ENCODE measurements at regions of chr22 and their contacts with region 1.

Region 1: GRCh38 chr22:29553351-29554224 is at the start of gene THOC5:
- DNase-seq: peak; percentile 71
- ATAC-seq: peak; percentile 99
- H3K4me3 ChIP-seq: peak within 1 kb of the TSS; percentile 77
- H3K27ac ChIP-seq: peak within 1 kb of the TSS; percentile 68
- H3K4me1 ChIP-seq: no peaks in the 10 kb centered on the region
- H3K27me3 ChIP-seq: no peaks in the 10 kb centered on the region
- CTCF ChIP-seq: peak; percentile 49 to 74 (median 58)
- EP300 ChIP-seq: no peak
- POLR2A ChIP-seq: peak; percentile 91
- RAD21 ChIP-seq: no peak
- polyA plus RNA-seq, gene THOC5: 20.9 to 40.9 TPM

Region 2: DNA sequence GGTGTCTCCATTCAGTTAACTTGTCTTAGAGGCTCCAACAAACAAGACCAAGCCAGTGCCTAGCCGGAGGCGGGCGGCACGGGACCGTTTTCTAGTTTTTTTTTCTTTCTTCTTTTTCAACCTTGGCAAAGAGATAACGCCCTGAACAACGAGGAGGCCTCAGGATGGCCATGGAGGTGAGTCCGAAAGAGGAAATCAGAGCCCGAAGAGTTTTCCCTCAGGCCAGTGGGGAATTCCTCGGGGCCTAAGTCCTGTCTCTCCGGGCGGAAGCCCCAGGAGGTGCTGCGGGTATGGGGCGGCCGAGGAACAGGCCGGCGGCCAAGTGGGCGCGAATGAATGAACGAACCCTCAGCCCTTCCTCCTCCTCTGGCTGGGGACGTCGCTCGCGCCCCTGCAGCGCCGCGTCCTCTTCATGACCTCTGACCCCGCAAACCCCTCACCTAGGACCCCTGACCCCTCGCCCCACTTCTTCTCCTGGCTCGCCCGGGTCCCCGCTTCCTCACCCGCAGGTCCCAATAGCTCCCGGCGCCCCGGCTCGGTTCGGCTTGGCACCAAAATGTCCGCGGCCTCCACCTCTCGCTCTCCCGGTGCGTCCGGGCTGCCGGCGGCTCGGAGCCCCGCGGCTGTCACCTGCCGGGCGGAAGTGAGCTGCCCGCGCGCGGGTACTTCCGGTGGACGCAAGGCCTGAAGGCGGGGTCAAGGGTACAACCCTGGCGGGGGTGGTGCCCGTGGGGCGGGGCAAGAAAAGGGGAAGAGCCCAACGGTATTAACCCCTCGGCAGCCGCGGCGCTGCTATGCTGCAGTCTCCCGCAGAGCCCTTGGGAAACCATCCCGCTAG is 165.4 kb before region 1 on chr22 and contains the start of gene AP1B1:
- CTCF ChIA-PET with region 1: interaction called, 10 read pairs
- POLR2A ChIA-PET with region 1: interaction called, 3 read pairs
- RAD21 ChIA-PET with region 1: interaction called, 3 read pairs
- SMC1A ChIA-PET with region 1: no interaction called
- in situ Hi-C with region 1: no loop called
- intact Hi-C with region 1: no loop called
- DNase-seq: peak; percentile 69
- ATAC-seq: peak; percentile 90
- H3K4me3 ChIP-seq: peak within 1 kb of the TSS; percentile 92
- H3K27ac ChIP-seq: peak within 1 kb of the TSS; percentile 78
- H3K4me1 ChIP-seq: peaks cover 38% of the 10 kb centered on the region
- H3K27me3 ChIP-seq: no peaks in the 10 kb centered on the region
- CTCF ChIP-seq: no peak
- EP300 ChIP-seq: no peak
- POLR2A ChIP-seq: peak; percentile 93
- RAD21 ChIP-seq: no peak
- polyA plus RNA-seq, gene AP1B1: 2.1 to 5.0 TPM

Region 3: DNA sequence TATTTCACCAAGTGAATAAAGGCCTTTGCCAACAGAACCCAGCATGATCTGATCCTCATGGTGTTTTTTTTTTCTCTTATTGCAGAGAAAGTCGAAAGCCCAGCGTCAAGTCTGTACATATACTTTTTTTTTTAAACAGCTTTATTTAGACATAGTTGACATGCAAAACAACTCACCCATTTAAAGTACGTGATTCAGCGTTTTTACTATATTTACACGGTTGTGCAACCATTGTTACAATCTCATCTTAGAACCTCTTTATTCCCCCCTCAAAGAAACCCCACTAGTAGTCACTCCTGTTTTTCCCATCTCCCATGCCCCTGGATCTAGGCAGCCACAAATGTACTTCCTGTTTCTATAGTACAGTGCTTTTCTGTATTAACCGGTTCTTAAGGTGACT is 144.6 kb before region 1 on chr22:
- CTCF ChIA-PET with region 1: interaction called, 3 read pairs
- POLR2A ChIA-PET with region 1: no interaction called
- RAD21 ChIA-PET with region 1: no interaction called
- SMC1A ChIA-PET with region 1: no interaction called
- in situ Hi-C with region 1: no loop called
- intact Hi-C with region 1: loop called (anchors 10 kb)
- DNase-seq: no peak
- ATAC-seq: no peak
- H3K4me3 ChIP-seq: no peak overlapping the region
- H3K27ac ChIP-seq: no peak overlapping the region
- H3K4me1 ChIP-seq: peaks cover 23% of the 10 kb centered on the region
- H3K27me3 ChIP-seq: no peaks in the 10 kb centered on the region
- CTCF ChIP-seq: no peak
- EP300 ChIP-seq: no peak
- POLR2A ChIP-seq: no peak
- RAD21 ChIP-seq: no peak

Region 4: GRCh38 chr22:29580200-29580810 is 26.7 kb after region 1 on chr22:
- CTCF ChIA-PET with region 1: interaction called, 11 read pairs
- POLR2A ChIA-PET with region 1: interaction called, 7 read pairs
- RAD21 ChIA-PET with region 1: no interaction called
- SMC1A ChIA-PET with region 1: no interaction called
- in situ Hi-C with region 1: no loop called
- intact Hi-C with region 1: loop called (anchors 2 kb)
- DNase-seq: no peak
- ATAC-seq: peak; percentile 66
- H3K4me3 ChIP-seq: peak overlapping the region; percentile 99
- H3K27ac ChIP-seq: peak overlapping the region; percentile 51
- H3K4me1 ChIP-seq: peaks cover 4% of the 10 kb centered on the region; the same call in 1 of the 2 replicates
- H3K27me3 ChIP-seq: no peaks in the 10 kb centered on the region
- CTCF ChIP-seq: no peak
- EP300 ChIP-seq: no peak
- POLR2A ChIP-seq: no peak
- RAD21 ChIP-seq: no peak

Region 5: DNA sequence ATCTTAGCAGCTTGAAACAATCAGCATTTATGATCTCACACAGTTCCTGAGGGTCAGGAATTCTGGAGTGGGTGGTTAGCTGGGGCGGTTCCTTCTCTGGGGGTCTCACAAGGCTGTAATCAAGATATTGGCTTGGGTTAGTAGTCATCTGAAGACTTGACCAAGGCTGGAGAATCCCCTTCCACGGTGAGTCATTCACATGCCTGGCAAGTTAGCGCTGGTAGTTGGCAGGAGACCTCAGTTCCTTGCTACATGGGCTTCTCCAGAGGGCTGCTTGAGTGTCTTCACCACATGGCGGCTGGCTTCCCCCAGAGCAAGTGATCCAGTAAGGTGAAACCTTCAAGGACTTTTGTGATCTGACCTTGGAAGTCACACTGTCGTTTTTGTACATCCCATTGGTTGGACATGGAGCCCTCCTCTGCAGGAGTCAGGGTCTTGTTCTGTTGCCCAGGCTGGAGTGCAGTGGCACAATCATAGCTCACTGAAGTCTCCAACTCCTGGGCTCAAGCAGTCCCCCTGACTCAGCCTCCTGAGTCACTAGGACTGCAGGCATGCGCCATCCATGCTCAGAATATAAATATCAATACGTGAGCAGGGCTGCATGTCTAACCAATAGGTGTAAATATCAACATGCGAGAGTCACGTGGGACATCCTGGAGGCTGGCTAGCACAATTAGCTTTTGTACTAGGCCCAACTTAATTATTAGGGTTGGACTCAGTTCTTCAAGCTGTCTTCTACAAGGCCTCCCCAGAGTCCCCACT is 34.5 kb after region 1 on chr22:
- CTCF ChIA-PET with region 1: interaction called, 15 read pairs
- POLR2A ChIA-PET with region 1: no interaction called
- RAD21 ChIA-PET with region 1: no interaction called
- SMC1A ChIA-PET with region 1: interaction called, 4 read pairs
- in situ Hi-C with region 1: no loop called
- intact Hi-C with region 1: no loop called
- DNase-seq: no peak
- ATAC-seq: peak; percentile 19; the same call in 1 of the 3 replicates
- H3K4me3 ChIP-seq: no peak overlapping the region
- H3K27ac ChIP-seq: no peak overlapping the region
- H3K4me1 ChIP-seq: no peaks in the 10 kb centered on the region
- H3K27me3 ChIP-seq: no peaks in the 10 kb centered on the region
- CTCF ChIP-seq: no peak
- EP300 ChIP-seq: no peak
- POLR2A ChIP-seq: no peak
- RAD21 ChIP-seq: no peak

Region 6: GRCh38 chr22:29609139-29609538 is 55.6 kb after region 1 on chr22:
- CTCF ChIA-PET with region 1: interaction called, 6 read pairs
- POLR2A ChIA-PET with region 1: no interaction called
- RAD21 ChIA-PET with region 1: interaction called, 3 read pairs
- SMC1A ChIA-PET with region 1: no interaction called
- in situ Hi-C with region 1: loop called (anchors 5 kb)
- intact Hi-C with region 1: no loop called
- DNase-seq: no peak
- ATAC-seq: no peak; the same call in 2 of the 3 replicates
- H3K4me3 ChIP-seq: no peak overlapping the region
- H3K27ac ChIP-seq: no peak overlapping the region
- H3K4me1 ChIP-seq: no peaks in the 10 kb centered on the region; the same call in 1 of the 2 replicates
- H3K27me3 ChIP-seq: no peaks in the 10 kb centered on the region
- CTCF ChIP-seq: 0 out of 6 replicates have a peak, but pooled peaks of 2 of the 3 experiments have one; percentile 5 to 12
- EP300 ChIP-seq: no peak
- POLR2A ChIP-seq: no peak
- RAD21 ChIP-seq: no peak

Measured in GM12878 (cell line).